Activated naive CD8-positive, alpha-beta T cell treated with anti-CD3 and anti-CD28 coated beads, Interleukin-2, amount 10 ng/mL, durations not matched to agents 7 days and 5 days (primary cell): ENCODE measurements at regions of chr1 and their contacts with region 1.

Region 1: DNA sequence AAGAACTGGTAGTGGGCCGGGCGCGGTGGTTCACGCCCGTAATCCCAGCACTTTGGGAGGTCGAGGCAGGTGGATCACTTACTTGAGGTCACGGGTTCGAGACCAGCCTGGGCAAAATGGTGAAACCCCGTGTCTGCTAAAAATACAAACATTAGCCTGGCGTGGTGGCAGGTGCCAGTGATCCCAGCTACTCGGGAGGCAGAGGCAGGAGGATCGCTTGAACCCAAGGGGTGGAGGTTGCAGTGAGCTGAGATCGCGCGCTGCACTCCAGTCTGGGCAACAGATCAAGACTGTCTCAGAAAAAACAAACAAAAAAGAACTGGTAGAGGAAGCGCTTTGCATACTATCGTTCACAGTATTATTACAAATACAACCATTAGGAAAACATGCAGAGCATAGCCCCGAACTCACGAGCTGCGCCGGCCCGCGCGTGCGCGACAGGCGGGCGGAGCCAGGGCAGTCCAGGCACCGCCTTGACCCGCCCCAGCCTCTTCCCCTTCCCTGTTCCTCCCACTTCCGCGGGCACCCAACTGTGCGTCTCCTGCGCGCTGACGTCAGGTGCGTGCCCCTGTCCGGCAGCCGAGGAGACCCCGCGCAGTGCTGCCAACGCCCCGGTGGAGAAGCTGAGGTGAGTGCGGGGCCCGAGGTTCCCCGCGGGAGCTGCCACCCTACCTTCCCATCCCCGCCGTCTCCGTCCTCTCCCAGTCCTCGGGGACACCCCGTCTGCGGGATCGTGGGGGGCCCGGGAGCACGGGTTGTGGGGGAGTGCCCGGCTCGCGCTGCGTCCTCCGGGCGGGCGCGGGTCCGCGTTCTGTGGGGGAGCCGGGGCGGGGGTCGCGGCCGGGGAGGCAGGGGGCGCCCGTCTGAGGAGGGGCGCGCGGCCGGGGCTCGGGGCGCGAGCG is at the start of gene CDC42:
- DNase-seq: peak; percentile 98
- ATAC-seq: peak; percentile 94
- H3K4me3 Mint-ChIP-seq: peak within 1 kb of the TSS; percentile 99
- H3K27ac Mint-ChIP-seq: peak within 1 kb of the TSS; percentile 97
- H3K4me1 Mint-ChIP-seq: peaks cover 43% of the 10 kb centered on the region
- H3K27me3 Mint-ChIP-seq: no peaks in the 10 kb centered on the region
- total RNA-seq, gene CDC42: 283 to 303 TPM

Region 2: DNA sequence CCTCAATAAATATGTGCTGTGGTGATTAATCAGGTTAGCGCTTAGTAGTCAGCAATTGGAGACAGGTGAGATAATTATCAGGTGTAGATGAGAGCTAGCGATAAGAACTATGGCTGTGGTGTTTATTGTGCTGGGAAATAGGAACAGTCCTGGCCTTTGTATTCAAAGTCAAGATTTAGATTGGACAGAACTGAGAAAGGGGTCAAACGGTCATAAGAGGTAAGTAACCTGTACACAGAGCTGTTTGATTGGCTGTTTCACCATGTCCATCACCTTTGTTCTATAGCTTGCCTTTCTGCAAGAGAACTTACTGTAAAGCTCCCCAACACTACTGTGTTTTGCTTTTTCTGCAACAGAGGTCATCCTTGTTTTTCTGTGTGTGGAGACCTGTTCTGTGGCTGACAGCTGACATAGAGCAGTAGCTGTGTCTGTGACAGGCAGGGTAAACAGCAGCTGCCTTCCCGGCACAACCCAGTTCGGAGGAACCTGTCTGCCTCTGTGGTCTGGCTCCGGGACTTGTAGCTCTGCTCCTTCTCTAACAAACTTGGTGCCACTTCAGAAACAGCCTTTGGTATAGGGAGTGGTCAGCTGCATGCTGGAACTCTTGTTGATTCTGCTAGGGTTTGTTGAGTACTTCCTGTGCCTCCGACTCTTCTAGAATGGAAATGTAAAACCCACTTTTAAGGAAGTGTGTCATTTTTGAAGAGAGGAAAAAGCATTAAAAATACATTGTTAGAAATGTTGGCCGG is 21.0 kb before region 1 on chr1:
- POLR2A ChIA-PET with region 1: interaction called, 207 read pairs
- DNase-seq: no peak
- ATAC-seq: peak; percentile 62
- H3K4me3 Mint-ChIP-seq: peak overlapping the region; percentile 60
- H3K27ac Mint-ChIP-seq: peak overlapping the region; percentile 83
- H3K4me1 Mint-ChIP-seq: peaks cover 27% of the 10 kb centered on the region
- H3K27me3 Mint-ChIP-seq: no peaks in the 10 kb centered on the region

Region 3: GRCh38 chr1:22039594-22040285 is 12.6 kb before region 1 on chr1:
- POLR2A ChIA-PET with region 1: interaction called, 207 read pairs
- DNase-seq: peak; percentile 81
- ATAC-seq: peak; percentile 98
- H3K4me3 Mint-ChIP-seq: peak overlapping the region; percentile 89
- H3K27ac Mint-ChIP-seq: peak overlapping the region; percentile 96
- H3K4me1 Mint-ChIP-seq: peaks cover 37% of the 10 kb centered on the region
- H3K27me3 Mint-ChIP-seq: no peaks in the 10 kb centered on the region

Region 4: DNA sequence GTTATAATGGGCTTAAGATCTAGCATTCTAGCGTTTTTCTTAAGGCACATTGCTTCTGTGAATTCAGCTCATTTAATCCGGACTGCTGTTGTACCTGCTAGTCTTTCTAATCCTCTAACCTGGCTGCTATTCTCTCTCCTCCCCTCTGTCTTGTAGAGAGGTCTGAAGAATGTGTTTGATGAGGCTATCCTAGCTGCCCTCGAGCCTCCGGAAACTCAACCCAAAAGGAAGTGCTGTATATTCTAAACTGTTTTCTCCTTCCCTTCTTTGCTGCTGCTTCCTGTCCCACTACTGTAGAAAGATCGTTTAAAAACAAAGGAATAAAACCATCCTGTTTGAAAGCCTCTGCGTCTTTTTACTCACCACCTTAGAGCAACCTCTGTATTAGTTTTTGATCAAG is 37.4 kb after region 1 on chr1:
- POLR2A ChIA-PET with region 1: interaction called, 15 read pairs
- DNase-seq: no peak
- ATAC-seq: peak; percentile 71
- H3K4me3 Mint-ChIP-seq: peak overlapping the region; percentile 61
- H3K27ac Mint-ChIP-seq: peak overlapping the region; percentile 85
- H3K4me1 Mint-ChIP-seq: peaks cover 58% of the 10 kb centered on the region
- H3K27me3 Mint-ChIP-seq: no peaks in the 10 kb centered on the region